Heart left ventricle (tissue), 16 donors: ENCODE measurements at regions of chrX and their contacts with region 1.

Region 1: DNA sequence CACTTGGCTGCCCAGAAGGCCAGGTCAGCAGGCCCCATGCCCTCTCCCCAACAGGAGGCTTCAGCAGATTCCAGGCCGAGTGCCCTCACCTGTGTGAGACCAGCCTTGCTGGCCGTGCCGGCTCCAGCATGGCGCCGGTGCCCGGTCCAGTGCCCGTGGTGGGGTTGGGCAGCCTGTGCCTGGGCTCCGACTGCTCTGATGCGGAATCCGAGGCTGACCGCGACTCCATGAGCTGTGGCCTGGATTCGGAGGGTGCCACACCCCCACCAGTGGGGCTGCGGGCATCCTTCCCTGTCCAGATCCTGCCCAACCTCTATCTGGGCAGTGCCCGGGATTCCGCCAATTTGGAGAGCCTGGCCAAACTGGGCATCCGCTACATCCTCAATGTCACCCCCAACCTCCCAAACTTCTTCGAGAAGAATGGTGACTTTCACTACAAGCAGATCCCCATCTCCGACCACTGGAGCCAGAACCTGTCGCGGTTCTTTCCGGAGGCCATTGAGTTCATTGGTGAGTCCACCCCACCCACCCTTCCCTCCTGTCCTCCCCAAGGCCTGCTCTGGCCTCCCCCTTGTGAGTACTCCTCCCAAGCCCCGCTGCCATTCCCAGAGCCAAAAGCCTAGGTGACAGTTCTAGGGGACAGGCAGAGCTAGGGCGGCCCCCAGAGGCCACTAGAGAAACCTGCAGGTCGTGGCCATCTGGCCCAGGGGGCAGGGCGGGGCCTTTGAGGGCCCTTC is 2.3 kb downstream of the DUSP9 start:
- DNase-seq: peak in 2 of 5 donors; percentile 39 to 50
- ATAC-seq: peak in 3 of 4 donors; percentile 43 to 70 (median 48)
- H3K4me3 ChIP-seq: no peak overlapping the region
- H3K27ac ChIP-seq: no peak overlapping the region
- H3K4me1 ChIP-seq: peaks cover 0 to 19% (median 0%) of the 10 kb centered on the region in 12 donors
- H3K27me3 ChIP-seq: peaks cover 0 to 52% (median 23%) of the 10 kb centered on the region in 9 donors
- CTCF ChIP-seq: peak in 10 of 12 donors; percentile 20 to 46 (median 29)
- POLR2A ChIP-seq: no peak

Region 2: GRCh38 chrX:153554519-153555167 is 94.7 kb before region 1 on chrX:
- intact Hi-C with region 1: loop called in 5 of 10 experiments (anchors 5 kb)
- DNase-seq: peak; percentile 44 to 81 (median 54)
- ATAC-seq: peak; percentile 42 to 80 (median 66)
- H3K4me3 ChIP-seq: no peak overlapping the region
- H3K27ac ChIP-seq: no peak overlapping the region
- H3K4me1 ChIP-seq: no peaks in the 10 kb centered on the region
- H3K27me3 ChIP-seq: peaks cover 0 to 14% (median 0%) of the 10 kb centered on the region in 9 donors
- CTCF ChIP-seq: peak; percentile 46 to 73 (median 62)
- POLR2A ChIP-seq: no peak

Region 3: DNA sequence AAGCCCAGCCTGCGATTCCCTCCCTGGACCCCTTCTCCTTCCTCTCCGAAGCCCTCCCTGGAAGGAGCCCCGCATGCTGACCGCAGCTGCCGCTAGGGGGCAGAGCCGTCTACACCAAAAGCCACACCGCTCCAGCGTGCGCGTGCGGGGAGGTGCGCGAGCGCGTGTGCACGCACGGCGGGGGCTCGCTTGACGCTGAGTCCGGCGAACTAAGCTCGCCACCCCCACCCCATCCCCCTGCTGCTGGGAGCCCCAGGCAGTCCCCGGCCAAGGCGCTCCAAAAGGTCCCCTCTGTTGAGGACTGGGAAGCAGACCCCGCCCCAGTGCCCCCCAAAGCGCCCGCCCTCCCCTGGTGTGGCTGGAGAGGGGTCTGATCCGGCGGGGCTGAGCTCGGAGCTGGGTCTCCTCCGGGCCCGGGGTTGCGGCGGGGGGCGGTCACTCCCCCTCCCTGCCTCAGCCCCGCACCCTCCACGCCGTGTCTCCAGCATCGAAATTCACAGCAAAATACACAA is 39.4 kb before region 1 on chrX:
- intact Hi-C with region 1: loop called in 1 of 10 experiments (anchors 5 kb)
- DNase-seq: peak; percentile 68 to 88 (median 71)
- ATAC-seq: peak; percentile 82 to 95 (median 92)
- H3K4me3 ChIP-seq: peak overlapping the region in 11 of 12 donors; percentile 7 to 51 (median 45)
- H3K27ac ChIP-seq: no peak overlapping the region
- H3K4me1 ChIP-seq: peaks cover 0 to 11% (median 4%) of the 10 kb centered on the region in 12 donors
- H3K27me3 ChIP-seq: peaks cover 0 to 50% (median 0%) of the 10 kb centered on the region in 9 donors
- CTCF ChIP-seq: peak; percentile 63 to 82 (median 72)
- POLR2A ChIP-seq: no peak

Region 4: GRCh38 chrX:153667956-153668396 is 18.6 kb after region 1 on chrX:
- intact Hi-C with region 1: no loop called
- DNase-seq: peak; percentile 76 to 91 (median 85)
- ATAC-seq: peak; percentile 74 to 92 (median 88)
- H3K4me3 ChIP-seq: no peak overlapping the region
- H3K27ac ChIP-seq: peak overlapping the region in 1 of 12 donors; percentile 73
- H3K4me1 ChIP-seq: no peaks in the 10 kb centered on the region
- H3K27me3 ChIP-seq: peaks cover 0 to 22% (median 3%) of the 10 kb centered on the region in 9 donors
- CTCF ChIP-seq: peak; percentile 51 to 76 (median 70)
- POLR2A ChIP-seq: no peak

Region 5: GRCh38 chrX:153818571-153819383 is 169.4 kb after region 1 on chrX:
- intact Hi-C with region 1: no loop called
- DNase-seq: peak in 3 of 5 donors; percentile 33 to 73 (median 47)
- ATAC-seq: peak in 3 of 4 donors; percentile 63 to 85 (median 78)
- H3K4me3 ChIP-seq: peak overlapping the region; percentile 18 to 59 (median 50)
- H3K27ac ChIP-seq: peak overlapping the region in 4 of 12 donors; percentile 5 to 48 (median 34)
- H3K4me1 ChIP-seq: peaks cover 0 to 7% (median 0%) of the 10 kb centered on the region in 12 donors
- H3K27me3 ChIP-seq: peaks cover 0 to 49% (median 0%) of the 10 kb centered on the region in 9 donors
- CTCF ChIP-seq: no peak
- POLR2A ChIP-seq: no peak